Breast epithelium (tissue), 4 donors: ENCODE measurements at regions of chr3 and their contacts with region 1.

Region 1: GRCh38 chr3:115922681-115923347 is 299.5 kb downstream of the GAP43 start:
- DNase-seq: no peak
- H3K4me3 ChIP-seq: no peak overlapping the region
- H3K27ac ChIP-seq: no peak overlapping the region
- H3K4me1 ChIP-seq: no peaks in the 10 kb centered on the region
- H3K27me3 ChIP-seq: no peaks in the 10 kb centered on the region
- CTCF ChIP-seq: no peak
- POLR2A ChIP-seq: no peak

Region 2: GRCh38 chr3:115899001-115899400 is 23.8 kb before region 1 on chr3:
- intact Hi-C with region 1: no loop called
- DNase-seq: no peak
- H3K4me3 ChIP-seq: no peak overlapping the region
- H3K27ac ChIP-seq: no peak overlapping the region
- H3K4me1 ChIP-seq: no peaks in the 10 kb centered on the region
- H3K27me3 ChIP-seq: no peaks in the 10 kb centered on the region
- CTCF ChIP-seq: no peak
- POLR2A ChIP-seq: no peak

Region 3: GRCh38 chr3:115912372-115912771 is 10.4 kb before region 1 on chr3:
- intact Hi-C with region 1: loop called (anchors 1 kb)
- DNase-seq: no peak
- H3K4me3 ChIP-seq: no peak overlapping the region
- H3K27ac ChIP-seq: no peak overlapping the region
- H3K4me1 ChIP-seq: no peaks in the 10 kb centered on the region
- H3K27me3 ChIP-seq: no peaks in the 10 kb centered on the region
- CTCF ChIP-seq: no peak
- POLR2A ChIP-seq: no peak